ENCODE measurements at regions of chr4 and their contacts with region 1.

Region 1: DNA sequence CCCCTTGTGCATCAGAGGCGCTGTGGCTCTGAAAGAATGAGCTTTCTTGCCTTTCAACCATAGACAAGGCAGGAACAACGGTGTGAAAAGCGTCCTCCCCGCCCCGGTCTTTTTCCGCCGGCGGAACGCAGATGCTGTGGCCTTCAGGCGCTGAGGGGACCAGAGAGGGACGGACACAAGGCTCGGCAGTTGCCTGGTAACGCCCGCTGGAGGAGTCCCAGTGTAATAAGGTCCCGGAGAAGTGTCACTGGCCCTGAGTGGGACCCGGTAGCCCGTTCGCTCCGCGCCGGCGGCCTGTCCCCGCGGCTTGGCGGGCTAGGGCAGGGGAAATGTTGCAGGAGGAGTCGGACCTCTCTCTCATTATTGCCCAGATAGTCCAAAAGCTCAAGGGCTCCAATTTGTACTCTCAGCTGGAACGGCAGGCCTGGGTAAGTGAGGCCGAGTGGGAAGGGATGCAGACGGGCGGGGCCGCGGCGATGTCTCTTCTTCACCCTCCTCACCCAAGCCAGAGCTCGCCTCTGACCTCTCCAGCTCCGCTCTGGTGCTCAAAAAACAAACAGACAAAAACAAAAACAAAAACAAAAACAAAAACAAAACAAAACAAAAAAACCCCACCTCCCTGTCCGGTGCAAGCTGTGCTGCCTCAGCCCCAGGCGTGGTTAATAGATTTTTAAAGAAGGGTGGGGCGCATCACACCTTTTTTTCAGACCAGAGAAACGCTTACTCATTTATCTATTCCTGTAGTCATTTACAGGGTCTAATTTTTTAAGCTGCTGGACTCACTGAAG is at the start of gene TBC1D19:
- DNase-seq: peak; percentile 47
- H3K4me3 ChIP-seq: peak within 1 kb of the TSS; percentile 85
- H3K27ac ChIP-seq: peak within 1 kb of the TSS; percentile 53
- H3K27me3 ChIP-seq: no peaks in the 10 kb centered on the region
- CTCF ChIP-seq: no peak
- polyA plus RNA-seq, gene TBC1D19: 25.9 and 37.0 TPM in 2 replicates

Region 2: DNA sequence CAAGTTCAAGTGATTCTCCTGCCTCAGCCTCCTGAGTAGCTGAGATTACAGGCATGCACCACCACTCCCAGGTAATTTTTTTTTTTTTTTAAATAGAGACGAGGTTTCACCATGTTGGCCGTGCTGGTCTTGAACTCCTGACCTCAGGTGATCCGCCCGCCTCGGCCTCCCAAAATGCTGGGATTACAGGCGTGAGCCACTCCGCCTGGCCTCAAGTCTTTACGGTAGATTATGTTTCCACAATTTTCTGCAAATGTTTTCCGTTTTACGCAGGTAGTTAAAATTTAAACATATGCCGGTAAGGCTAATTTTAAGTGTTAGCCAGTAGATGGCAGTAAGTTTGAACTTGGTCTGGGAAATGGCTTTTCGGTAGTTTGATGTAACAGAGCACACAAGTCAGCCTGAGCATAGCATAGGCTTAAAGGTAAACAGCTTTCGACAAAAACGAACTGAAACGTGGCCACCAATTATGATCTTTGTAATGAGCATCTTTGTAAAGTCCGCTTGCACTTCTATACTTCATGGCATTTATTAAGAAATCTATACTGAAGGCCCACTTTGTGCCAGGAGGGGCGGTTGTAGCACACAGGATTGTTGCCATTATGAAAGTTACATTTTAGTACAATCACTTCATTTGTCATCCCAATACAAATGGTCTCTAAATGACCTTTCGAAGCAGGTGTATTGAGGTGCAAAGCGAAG is 124.9 kb before region 1 on chr4:
- CTCF ChIA-PET with region 1: interaction called, 12 read pairs
- POLR2A ChIA-PET with region 1: interaction called, 4 read pairs
- DNase-seq: peak; percentile 66
- H3K4me3 ChIP-seq: peak overlapping the region; percentile 15; the same call in 1 of the 2 replicates
- H3K27ac ChIP-seq: peak overlapping the region; percentile 76
- H3K27me3 ChIP-seq: no peaks in the 10 kb centered on the region
- CTCF ChIP-seq: peak; percentile 65

Measured in AG04450 (cell line).